ENCODE measurements at regions of chr1 and their contacts with region 1.

Region 1: DNA sequence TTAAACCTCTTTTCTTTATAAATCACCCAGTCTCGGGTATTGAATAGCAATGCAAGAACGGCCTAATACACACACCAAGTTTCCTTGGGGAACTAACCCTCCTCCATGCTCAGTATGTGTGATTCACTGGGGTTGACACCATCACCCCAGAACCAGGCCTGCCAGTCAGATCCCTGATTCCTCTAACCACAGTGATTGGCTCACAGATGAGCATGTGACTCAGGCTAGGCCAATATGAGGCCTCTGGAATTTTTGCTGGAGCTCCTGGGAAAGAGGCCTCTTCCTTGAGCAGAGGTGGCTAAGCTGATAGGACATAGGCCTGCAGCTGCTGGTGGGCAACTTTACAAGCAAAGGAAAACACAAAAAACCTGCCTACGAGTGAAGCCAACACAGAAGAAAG is 74.7 kb upstream of the ZBTB40 start:
- DNase-seq: no peak
- H3K4me3 ChIP-seq: no peak overlapping the region
- CTCF ChIP-seq: no peak

Region 2: GRCh38 chr1:22332795-22333499 is 44.0 kb before region 1 on chr1:
- in situ Hi-C with region 1: loop called (anchors 5 kb)
- DNase-seq: no peak
- H3K4me3 ChIP-seq: no peak overlapping the region
- CTCF ChIP-seq: no peak